CD4-positive, alpha-beta memory T cell (primary cell): ENCODE measurements at regions of chr10 and their contacts with region 1.

Region 1: GRCh38 chr10:96395931-96396877 is 37.4 kb upstream of the OPALIN start:
- DNase-seq: peak in 4 of 5 donors; percentile 46 to 53 (median 48)
- H3K4me3 ChIP-seq: peak overlapping the region in 1 of 2 donors; percentile 14
- H3K4me3 Mint-ChIP-seq: peak overlapping the region in 3 of 8 donors; percentile 34 to 64 (median 56)
- H3K27ac ChIP-seq: no peak overlapping the region
- H3K27ac Mint-ChIP-seq: peak overlapping the region in 1 of 7 donors; percentile 44
- H3K4me1 ChIP-seq: no peaks in the 10 kb centered on the region
- H3K4me1 Mint-ChIP-seq: peaks cover 0 to 4% (median 2%) of the 10 kb centered on the region in 4 donors
- H3K27me3 ChIP-seq: no peaks in the 10 kb centered on the region
- H3K27me3 Mint-ChIP-seq: peaks cover 16 to 34% of the 10 kb centered on the region in 2 donors

Region 2: DNA sequence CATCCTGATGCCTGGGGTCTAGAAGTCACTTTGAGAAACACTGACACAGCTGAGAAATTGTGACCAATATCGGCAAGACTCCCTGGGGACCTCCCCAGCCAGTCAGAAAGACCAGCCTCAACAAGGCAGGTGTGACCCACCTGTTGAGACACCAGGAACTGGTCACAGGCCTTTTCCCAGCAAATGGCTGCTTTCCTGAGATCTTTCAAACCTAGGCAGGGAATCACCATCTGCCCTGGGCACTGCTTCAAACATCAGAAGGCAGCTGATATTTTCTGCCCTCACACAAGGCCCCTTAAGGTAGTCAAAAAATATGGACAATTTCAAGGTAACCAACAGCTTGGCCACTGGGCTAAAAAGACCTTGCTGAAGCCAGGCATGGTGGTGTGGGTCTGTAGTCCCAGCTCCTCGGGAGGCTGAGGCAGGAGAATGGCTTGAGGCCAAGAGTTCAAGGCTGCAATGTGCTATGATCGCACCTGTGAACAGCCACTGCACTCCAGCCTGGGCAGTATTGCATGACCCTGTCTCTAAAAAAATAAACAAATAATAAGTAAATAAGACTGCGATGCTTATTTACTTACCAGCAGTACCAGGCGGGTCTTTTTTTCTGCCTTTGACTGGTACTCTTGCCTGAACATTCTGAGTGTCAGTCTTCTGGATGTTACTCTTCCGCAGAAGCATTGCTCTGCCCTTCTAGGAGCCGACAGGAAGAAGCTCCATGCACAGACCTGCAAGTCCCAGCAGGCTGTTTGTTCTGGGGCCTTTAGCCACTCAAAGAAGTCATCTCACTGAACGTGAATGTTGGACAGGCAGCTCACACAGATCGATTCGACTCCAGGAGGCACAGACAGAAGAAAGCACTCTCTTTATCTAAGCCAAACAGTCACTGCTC is 894.8 kb before region 1 on chr10:
- CTCF ChIA-PET with region 1: no interaction called
- POLR2A ChIA-PET with region 1: no interaction called
- intact Hi-C with region 1: no loop called
- DNase-seq: no peak
- H3K4me3 ChIP-seq: no peak overlapping the region
- H3K4me3 Mint-ChIP-seq: no peak overlapping the region
- H3K27ac ChIP-seq: no peak overlapping the region
- H3K27ac Mint-ChIP-seq: no peak overlapping the region
- H3K4me1 ChIP-seq: no peaks in the 10 kb centered on the region
- H3K4me1 Mint-ChIP-seq: no peaks in the 10 kb centered on the region
- H3K27me3 ChIP-seq: no peaks in the 10 kb centered on the region
- H3K27me3 Mint-ChIP-seq: peaks cover 0 to 7% of the 10 kb centered on the region in 2 donors

Region 3: GRCh38 chr10:96407560-96408069 is 11.4 kb after region 1 on chr10:
- CTCF ChIA-PET with region 1: interaction called, 11 read pairs
- POLR2A ChIA-PET with region 1: no interaction called
- intact Hi-C with region 1: no loop called
- DNase-seq: no peak
- H3K4me3 ChIP-seq: no peak overlapping the region
- H3K4me3 Mint-ChIP-seq: no peak overlapping the region
- H3K27ac ChIP-seq: no peak overlapping the region
- H3K27ac Mint-ChIP-seq: no peak overlapping the region
- H3K4me1 ChIP-seq: no peaks in the 10 kb centered on the region
- H3K4me1 Mint-ChIP-seq: no peaks in the 10 kb centered on the region
- H3K27me3 ChIP-seq: peaks cover 3% of the 10 kb centered on the region
- H3K27me3 Mint-ChIP-seq: peaks cover 27 to 38% of the 10 kb centered on the region in 2 donors

Region 4: DNA sequence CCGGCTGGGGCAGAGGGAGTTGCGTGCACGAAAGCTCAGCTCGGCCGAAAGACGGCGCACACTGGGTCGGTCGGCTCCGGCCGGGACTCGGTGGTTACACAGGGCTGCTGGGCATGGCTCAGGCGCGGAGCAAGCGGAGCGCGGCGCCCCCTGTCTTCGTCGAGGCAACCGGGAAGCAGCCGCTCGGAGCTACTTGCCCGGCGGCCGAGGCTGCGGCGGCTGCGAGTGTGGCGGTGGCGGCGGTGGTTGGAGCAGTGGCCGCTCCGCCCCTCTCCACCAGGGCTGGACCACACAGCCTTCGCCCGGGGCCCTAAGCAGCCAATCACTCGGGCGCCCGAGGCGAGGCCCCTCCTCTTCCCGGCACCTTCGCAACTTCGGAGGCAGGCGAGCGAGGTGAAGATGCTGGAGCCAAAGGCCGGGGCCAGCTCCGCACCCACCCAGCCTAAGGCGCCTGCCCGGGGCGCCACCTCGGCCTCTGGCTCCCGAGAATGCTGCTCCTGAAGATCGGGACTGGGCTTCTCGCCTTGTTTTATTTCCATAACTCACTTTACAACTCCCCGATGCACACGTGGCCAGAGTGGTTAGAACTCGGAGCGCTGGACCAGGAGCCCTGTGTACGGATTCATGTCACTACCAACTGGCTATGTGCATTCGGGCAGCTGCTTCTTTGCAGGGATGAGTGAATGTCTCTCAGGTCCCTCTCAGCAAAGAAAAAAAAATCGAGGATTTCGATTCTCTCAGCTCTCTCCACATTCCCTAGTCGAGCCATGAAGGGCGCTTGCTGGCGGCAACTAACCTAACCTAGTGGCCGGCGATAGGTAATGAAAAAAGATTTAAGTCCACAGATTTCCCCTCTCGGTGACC is 117.7 kb after region 1 on chr10 and contains the start of gene TLL2:
- CTCF ChIA-PET with region 1: no interaction called
- POLR2A ChIA-PET with region 1: no interaction called
- intact Hi-C with region 1: loop called (anchors 1 kb)
- DNase-seq: peak; percentile 26 to 54 (median 39)
- H3K4me3 ChIP-seq: peak within 1 kb of the TSS; percentile 15 to 55
- H3K4me3 Mint-ChIP-seq: peak within 1 kb of the TSS; percentile 81 to 86 (median 84)
- H3K27ac ChIP-seq: no peak within 1 kb of the TSS
- H3K27ac Mint-ChIP-seq: peak within 1 kb of the TSS in 2 of 7 donors; percentile 56 to 67
- H3K4me1 ChIP-seq: peaks cover 23% of the 10 kb centered on the region
- H3K4me1 Mint-ChIP-seq: peaks cover 10 to 23% (median 16%) of the 10 kb centered on the region in 4 donors
- H3K27me3 ChIP-seq: peaks cover 10% of the 10 kb centered on the region
- H3K27me3 Mint-ChIP-seq: peaks cover 4 to 6% of the 10 kb centered on the region in 2 donors
- total RNA-seq, gene TLL2: 0.17 TPM in 1 of 2 experiments, not detected in the other

Region 5: GRCh38 chr10:96642973-96643372 is 246.8 kb after region 1 on chr10:
- CTCF ChIA-PET with region 1: no interaction called
- POLR2A ChIA-PET with region 1: no interaction called
- intact Hi-C with region 1: loop called (anchors 10 kb)
- DNase-seq: peak in 4 of 5 donors; percentile 8 to 44 (median 16)
- H3K4me3 ChIP-seq: no peak overlapping the region
- H3K4me3 Mint-ChIP-seq: no peak overlapping the region
- H3K27ac ChIP-seq: no peak overlapping the region
- H3K27ac Mint-ChIP-seq: no peak overlapping the region
- H3K4me1 ChIP-seq: peaks cover 5% of the 10 kb centered on the region
- H3K4me1 Mint-ChIP-seq: peaks cover 5 to 20% (median 13%) of the 10 kb centered on the region in 4 donors
- H3K27me3 ChIP-seq: no peaks in the 10 kb centered on the region
- H3K27me3 Mint-ChIP-seq: no peaks in the 10 kb centered on the region

Region 6: GRCh38 chr10:97025613-97026242 is 629.5 kb after region 1 on chr10:
- CTCF ChIA-PET with region 1: interaction called, 11 read pairs
- POLR2A ChIA-PET with region 1: no interaction called
- intact Hi-C with region 1: no loop called
- DNase-seq: peak in 4 of 5 donors; percentile 30 to 39 (median 34)
- H3K4me3 ChIP-seq: no peak overlapping the region
- H3K4me3 Mint-ChIP-seq: no peak overlapping the region
- H3K27ac ChIP-seq: no peak overlapping the region
- H3K27ac Mint-ChIP-seq: no peak overlapping the region
- H3K4me1 ChIP-seq: no peaks in the 10 kb centered on the region
- H3K4me1 Mint-ChIP-seq: no peaks in the 10 kb centered on the region
- H3K27me3 ChIP-seq: no peaks in the 10 kb centered on the region
- H3K27me3 Mint-ChIP-seq: peaks cover 0 to 3% of the 10 kb centered on the region in 2 donors